WTC11 (cell line): ENCODE measurements at regions of chr16 and their contacts with region 1.

Region 1: GRCh38 chr16:81696961-81697615 is 82.0 kb upstream of the PLCG2 start:
- DNase-seq: peak; percentile 84
- ATAC-seq: peak; percentile 81
- H3K4me3 Mint-ChIP-seq: no peak overlapping the region
- H3K27ac Mint-ChIP-seq: peak overlapping the region; percentile 68; the same call in 1 of the 2 replicates
- H3K4me1 Mint-ChIP-seq: no peaks in the 10 kb centered on the region
- H3K27me3 Mint-ChIP-seq: no peaks in the 10 kb centered on the region
- CTCF ChIP-seq: peak; percentile 50; the same call in 1 of the 2 replicates

Region 2: DNA sequence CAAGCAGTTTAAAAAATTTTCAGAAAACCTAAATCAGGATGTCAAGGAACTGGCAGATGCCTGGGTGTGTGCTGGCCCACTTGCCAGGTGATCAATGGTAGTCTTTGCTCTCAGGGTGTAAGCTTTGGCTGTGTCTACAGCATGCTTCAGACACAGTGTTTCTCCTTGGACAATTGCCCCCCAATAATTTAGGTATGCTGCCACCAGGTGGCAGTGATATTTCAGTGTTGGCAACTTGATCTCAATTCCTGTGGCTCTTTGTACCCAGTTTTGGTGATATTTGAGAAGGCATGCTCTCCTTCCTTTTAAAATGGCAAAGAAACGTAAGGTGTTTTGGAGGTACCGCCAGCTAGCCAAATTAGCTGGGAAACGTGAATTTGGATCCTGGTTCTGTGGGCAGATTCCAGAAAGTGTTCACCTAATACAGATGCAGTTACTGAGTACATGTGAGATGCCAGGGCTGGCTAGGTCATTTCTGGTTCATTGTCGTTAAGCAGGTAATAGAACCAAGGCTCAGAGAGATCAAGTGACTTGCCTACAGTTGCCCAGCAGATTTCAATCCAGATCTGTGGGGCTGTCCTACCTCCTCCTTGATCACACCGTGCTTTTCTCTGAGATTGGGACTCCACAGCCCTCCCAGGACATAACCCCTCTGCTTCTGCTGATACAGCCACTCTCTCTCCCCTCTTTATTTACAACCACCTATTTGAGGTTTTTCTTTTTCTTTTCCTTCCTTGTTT is 73.6 kb before region 1 on chr16:
- CTCF ChIA-PET with region 1: interaction called, 51 read pairs
- POLR2A ChIA-PET with region 1: no interaction called
- DNase-seq: peak; percentile 50
- ATAC-seq: peak; percentile 62
- H3K4me3 Mint-ChIP-seq: no peak overlapping the region
- H3K27ac Mint-ChIP-seq: peak overlapping the region; percentile 75
- H3K4me1 Mint-ChIP-seq: peaks cover 3% of the 10 kb centered on the region; the same call in 1 of the 2 replicates
- H3K27me3 Mint-ChIP-seq: no peaks in the 10 kb centered on the region
- CTCF ChIP-seq: peak; percentile 44; the same call in 1 of the 2 replicates

Region 3: GRCh38 chr16:81647527-81647926 is 49.6 kb before region 1 on chr16:
- CTCF ChIA-PET with region 1: interaction called, 13 read pairs
- POLR2A ChIA-PET with region 1: no interaction called
- DNase-seq: no peak
- ATAC-seq: peak; percentile 33
- H3K4me3 Mint-ChIP-seq: no peak overlapping the region
- H3K27ac Mint-ChIP-seq: no peak overlapping the region
- H3K4me1 Mint-ChIP-seq: peaks cover 43% of the 10 kb centered on the region
- H3K27me3 Mint-ChIP-seq: no peaks in the 10 kb centered on the region
- CTCF ChIP-seq: no peak

Region 4: DNA sequence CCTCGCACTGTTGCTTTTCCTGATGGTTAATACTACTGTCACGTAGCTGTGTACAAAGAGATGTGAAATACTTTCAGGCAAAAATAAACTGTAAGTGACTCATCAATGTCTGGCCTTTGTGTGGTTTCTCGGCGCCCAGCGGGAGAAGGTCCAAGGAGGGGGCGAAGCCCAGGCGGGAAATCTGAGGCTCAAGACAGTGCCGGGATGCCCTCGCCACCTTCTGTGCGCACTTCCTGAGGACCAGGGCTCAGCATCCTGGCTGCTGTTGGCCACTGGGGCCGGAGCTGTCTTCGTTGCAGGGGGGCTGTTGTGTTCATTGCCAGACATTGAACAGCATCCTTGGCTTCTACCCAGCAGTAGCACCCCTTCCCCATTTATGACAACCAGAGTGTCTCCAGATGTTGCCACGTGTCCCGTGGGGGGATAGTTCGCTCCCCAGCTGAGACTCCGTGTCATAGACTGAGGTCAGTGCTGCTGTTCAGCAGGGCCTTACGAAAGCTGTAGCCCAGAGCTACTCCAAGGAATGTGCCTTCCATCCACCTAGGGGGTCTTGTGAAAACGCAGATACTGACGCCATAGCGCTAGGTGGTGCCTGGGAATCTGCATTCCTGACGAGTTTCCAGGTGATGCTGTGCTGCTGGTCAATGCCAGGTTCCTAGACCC is 14.7 kb after region 1 on chr16:
- CTCF ChIA-PET with region 1: interaction called, 49 read pairs
- POLR2A ChIA-PET with region 1: no interaction called
- DNase-seq: peak; percentile 49
- ATAC-seq: peak; percentile 46
- H3K4me3 Mint-ChIP-seq: peak overlapping the region; percentile 40
- H3K27ac Mint-ChIP-seq: peak overlapping the region; percentile 68; the same call in 1 of the 2 replicates
- H3K4me1 Mint-ChIP-seq: peaks cover 62% of the 10 kb centered on the region
- H3K27me3 Mint-ChIP-seq: no peaks in the 10 kb centered on the region
- CTCF ChIP-seq: no peak

Region 5: GRCh38 chr16:81730090-81731051 is 33.3 kb after region 1 on chr16:
- CTCF ChIA-PET with region 1: interaction called, 20 read pairs
- POLR2A ChIA-PET with region 1: no interaction called
- DNase-seq: peak; percentile 99
- ATAC-seq: peak; percentile 96
- H3K4me3 Mint-ChIP-seq: peak overlapping the region; percentile 64
- H3K27ac Mint-ChIP-seq: peak overlapping the region; percentile 96
- H3K4me1 Mint-ChIP-seq: peaks cover 30% of the 10 kb centered on the region
- H3K27me3 Mint-ChIP-seq: no peaks in the 10 kb centered on the region
- CTCF ChIP-seq: peak; percentile 80

Region 6: GRCh38 chr16:81744385-81744784 is 47.3 kb after region 1 on chr16:
- CTCF ChIA-PET with region 1: no interaction called
- POLR2A ChIA-PET with region 1: no interaction called
- DNase-seq: no peak
- ATAC-seq: no peak
- H3K4me3 Mint-ChIP-seq: no peak overlapping the region
- H3K27ac Mint-ChIP-seq: no peak overlapping the region
- H3K4me1 Mint-ChIP-seq: peaks cover 16% of the 10 kb centered on the region
- H3K27me3 Mint-ChIP-seq: peaks cover 14% of the 10 kb centered on the region
- CTCF ChIP-seq: no peak